HEK293 (cell line): ENCODE measurements at regions of chr10 and their contacts with region 1.

Region 1: DNA sequence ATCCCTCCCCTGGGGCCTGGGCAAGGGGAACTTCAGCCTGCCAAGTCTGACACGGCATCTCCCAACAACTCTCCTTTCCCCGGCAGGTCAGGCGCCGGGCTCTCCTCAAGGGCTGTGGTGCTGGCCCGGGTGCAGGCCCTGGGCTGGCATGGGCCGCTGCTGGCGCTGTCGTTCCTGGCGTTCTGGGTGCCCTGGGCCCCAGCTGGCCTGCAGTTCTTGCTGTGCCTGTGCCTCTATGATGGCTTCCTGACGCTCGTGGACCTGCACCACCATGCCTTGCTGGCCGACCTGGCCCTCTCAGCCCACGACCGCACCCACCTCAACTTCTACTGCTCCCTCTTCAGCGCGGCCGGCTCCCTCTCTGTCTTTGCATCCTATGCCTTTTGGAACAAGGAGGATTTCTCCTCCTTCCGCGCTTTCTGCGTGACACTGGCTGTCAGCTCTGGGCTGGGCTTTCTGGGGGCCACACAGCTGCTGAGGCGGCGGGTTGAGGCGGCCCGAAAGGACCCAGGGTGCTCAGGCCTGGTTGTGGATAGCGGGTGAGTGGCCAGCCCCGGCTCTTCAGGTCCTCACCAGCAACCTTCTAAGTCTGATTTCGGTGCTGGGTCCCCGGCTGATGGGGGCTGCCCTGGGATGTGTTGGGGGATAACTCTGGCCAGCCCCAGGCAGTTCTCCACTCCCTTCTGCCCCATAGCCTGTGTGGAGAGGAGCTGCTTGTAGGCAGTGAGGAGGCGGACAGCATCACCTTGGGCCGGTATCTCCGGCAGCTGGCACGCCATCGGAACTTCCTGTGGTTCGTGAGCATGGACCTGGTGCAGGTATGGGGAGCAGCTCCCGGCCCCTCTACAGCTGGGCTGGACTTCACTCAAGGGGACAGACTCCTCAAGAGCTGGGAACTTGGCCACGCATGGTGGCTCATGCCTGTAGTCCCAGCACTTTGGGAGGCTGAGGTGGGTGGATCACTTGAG is 19.5 kb upstream of the C10orf95 start:
- H3K4me3 ChIP-seq: no peak overlapping the region
- H3K27ac ChIP-seq: no peak overlapping the region
- H3K4me1 ChIP-seq: no peaks in the 10 kb centered on the region
- CTCF ChIP-seq: no peak

Region 2: GRCh38 chr10:102492344-102492939 is 21.6 kb after region 1 on chr10:
- CTCF ChIA-PET with region 1: no interaction called
- POLR2A ChIA-PET with region 1: interaction called, 10 read pairs
- H3K4me3 ChIP-seq: no peak overlapping the region
- H3K27ac ChIP-seq: no peak overlapping the region
- H3K4me1 ChIP-seq: peaks cover 2% of the 10 kb centered on the region; the same call in 1 of the 2 replicates
- CTCF ChIP-seq: no peak